ENCODE measurements at regions of chr17 and their contacts with region 1.

Region 1: GRCh38 chr17:53792997-53793396 is 29.7 kb upstream of the KIF2B start:
- DNase-seq: no peak

Region 2: GRCh38 chr17:53780320-53780719 is 12.7 kb before region 1 on chr17:
- CTCF ChIA-PET with region 1: no interaction called
- POLR2A ChIA-PET with region 1: no interaction called
- DNase-seq: no peak

Region 3: DNA sequence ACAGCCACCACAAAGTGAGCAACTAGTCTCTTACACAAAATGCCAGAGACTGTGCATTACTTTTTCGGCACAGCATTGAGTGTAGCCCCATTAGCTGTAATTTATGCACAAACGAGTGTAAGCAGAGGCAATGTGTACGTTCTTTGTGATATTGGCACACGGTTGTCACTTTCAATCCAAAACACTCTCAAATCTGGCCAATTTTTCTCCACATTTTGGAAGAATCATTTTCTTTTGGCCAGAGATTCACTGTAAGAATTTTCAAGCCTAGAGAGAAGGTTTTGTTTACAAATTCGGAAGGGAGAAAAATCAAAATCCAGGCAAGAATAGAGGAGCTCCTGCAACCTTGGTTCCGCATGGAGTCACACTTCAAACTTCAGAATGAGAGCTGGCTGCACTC is 14.3 kb after region 1 on chr17:
- CTCF ChIA-PET with region 1: no interaction called
- POLR2A ChIA-PET with region 1: no interaction called
- DNase-seq: no peak

Region 4: GRCh38 chr17:53819956-53820355 is 27.0 kb after region 1 on chr17:
- CTCF ChIA-PET with region 1: interaction called, 11 read pairs
- POLR2A ChIA-PET with region 1: no interaction called
- DNase-seq: no peak